Activated T-helper 2 cell treated with anti-CD3 and anti-CD28 coated beads, Interferon-gamma antibody, Interleukin-2, Interleukin-4, amounts not matched to agents 10 μg/mL and 5 μg/mL and 100 μg/mL, durations not matched to agents 14 hours and 24 hours and 36 hours (primary cell): ENCODE measurements at regions of chr18 and their contacts with region 1.

Region 1: DNA sequence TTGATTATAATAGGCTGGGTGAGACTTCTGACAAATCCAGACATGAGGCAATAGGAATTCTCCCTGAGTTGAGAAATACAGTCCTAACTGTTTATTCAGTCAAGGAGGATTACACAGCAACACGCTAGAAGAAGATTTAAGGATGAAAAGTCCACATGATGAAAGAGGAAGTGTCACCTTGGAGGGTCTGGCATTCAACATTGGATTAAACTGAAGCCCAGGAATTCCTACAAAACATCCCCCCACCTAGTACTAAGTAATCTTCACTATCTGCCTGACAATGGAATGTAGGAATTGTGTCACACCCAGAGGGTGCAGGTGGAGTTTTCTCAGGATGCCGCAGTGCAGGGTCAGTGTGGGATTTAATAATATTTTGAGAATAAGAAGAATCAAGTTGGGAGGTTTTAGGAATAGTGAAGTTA is 142.4 kb downstream of the SOCS6 start:
- DNase-seq: no peak
- H3K4me3 Mint-ChIP-seq: no peak overlapping the region
- H3K27ac Mint-ChIP-seq: no peak overlapping the region
- H3K4me1 Mint-ChIP-seq: no peaks in the 10 kb centered on the region
- H3K27me3 Mint-ChIP-seq: no peaks in the 10 kb centered on the region

Region 2: DNA sequence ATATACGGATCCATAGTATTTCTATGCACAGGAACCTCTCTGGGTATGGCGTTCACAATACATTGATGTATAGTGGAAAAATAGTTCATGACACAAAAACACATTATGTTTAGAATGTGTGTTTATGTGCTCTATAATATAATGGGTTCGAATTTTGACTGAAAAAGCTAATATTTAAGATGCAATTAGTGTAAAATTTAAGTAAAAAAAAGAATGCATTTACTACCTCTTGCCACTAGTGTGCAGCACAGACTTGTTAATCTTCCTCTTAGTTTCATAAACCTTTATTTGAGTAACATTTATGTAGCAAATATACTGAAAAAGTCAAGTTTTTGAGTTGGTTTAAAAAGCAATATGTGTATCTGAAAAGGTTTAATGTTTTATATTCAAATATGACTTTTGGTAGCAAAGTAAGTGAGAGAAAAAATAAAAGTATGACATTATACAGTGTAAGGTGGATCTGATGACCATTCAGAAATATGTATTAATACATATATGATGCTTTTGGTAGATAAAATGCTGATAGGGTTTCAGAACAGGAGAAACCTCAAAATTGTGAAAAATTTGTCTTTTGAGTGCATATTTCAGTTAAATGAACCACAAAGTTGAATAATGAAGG is 1583.9 kb before region 1 on chr18:
- intact Hi-C with region 1: loop called (anchors 5 kb)
- DNase-seq: no peak
- H3K4me3 Mint-ChIP-seq: no peak overlapping the region
- H3K27ac Mint-ChIP-seq: no peak overlapping the region
- H3K4me1 Mint-ChIP-seq: no peaks in the 10 kb centered on the region
- H3K27me3 Mint-ChIP-seq: no peaks in the 10 kb centered on the region

Region 3: DNA sequence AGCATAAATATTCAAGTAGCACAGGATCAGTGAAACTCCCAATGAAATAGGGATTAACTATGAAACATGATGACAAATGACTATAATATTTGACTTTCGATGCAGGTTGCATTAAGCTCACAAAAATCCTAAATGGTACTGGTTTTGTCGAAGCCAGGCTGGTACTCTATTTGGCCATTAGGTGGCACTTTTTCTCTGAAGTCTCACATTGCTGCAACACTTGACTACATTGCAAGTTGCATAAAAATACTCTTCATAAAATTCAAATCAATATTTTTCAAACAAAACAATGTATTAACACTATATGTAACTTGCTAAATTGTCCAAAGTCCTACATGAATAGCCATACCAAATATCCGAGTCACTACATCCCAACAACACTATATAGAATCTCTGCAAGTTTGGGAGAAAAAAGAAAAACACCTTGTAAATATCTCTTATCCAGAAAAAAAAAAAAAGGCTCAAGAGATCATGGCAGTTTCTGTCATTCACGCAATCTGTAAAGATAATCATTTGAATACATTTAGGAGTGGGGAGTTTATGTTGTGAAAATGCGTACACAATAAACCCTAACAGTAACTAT is 235.3 kb before region 1 on chr18:
- intact Hi-C with region 1: loop called (anchors 1 kb)
- DNase-seq: no peak
- H3K4me3 Mint-ChIP-seq: no peak overlapping the region
- H3K27ac Mint-ChIP-seq: no peak overlapping the region
- H3K4me1 Mint-ChIP-seq: peaks cover 23% of the 10 kb centered on the region
- H3K27me3 Mint-ChIP-seq: no peaks in the 10 kb centered on the region

Region 4: GRCh38 chr18:70288851-70289328 is 142.3 kb before region 1 on chr18 and contains the start of gene SOCS6:
- intact Hi-C with region 1: loop called (anchors 10 kb)
- DNase-seq: peak; percentile 46
- H3K4me3 Mint-ChIP-seq: peak within 1 kb of the TSS; percentile 85
- H3K27ac Mint-ChIP-seq: peak within 1 kb of the TSS; percentile 70
- H3K4me1 Mint-ChIP-seq: peaks cover 18% of the 10 kb centered on the region
- H3K27me3 Mint-ChIP-seq: peaks cover 34% of the 10 kb centered on the region
- total RNA-seq, gene SOCS6: 3.8 and 4.5 TPM in 2 replicates